Sciatic nerve (tissue), 2 donors: ENCODE measurements at regions of chr7 and their contacts with region 1.

Region 1: DNA sequence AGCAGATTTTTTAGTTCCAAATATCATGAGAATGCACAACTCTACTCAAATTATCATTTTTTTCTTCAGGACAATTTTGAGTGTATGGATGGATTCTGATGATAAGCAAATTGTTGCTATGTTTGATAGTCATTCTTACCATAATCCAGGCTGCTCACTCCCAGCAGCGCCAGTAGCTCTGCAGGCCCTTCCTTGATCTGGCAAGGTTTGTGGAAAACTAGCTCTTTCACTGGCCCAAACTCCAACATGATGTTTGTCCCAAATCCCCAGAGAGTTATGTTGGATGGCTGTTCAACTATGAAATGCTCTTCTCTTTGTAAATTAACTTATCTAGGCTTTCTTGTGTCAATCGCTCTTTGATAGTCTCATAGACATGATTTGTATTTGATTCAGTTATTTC is 933.7 kb downstream of the DNAJB9 start:
- DNase-seq: no peak
- ATAC-seq: no peak

Region 2: DNA sequence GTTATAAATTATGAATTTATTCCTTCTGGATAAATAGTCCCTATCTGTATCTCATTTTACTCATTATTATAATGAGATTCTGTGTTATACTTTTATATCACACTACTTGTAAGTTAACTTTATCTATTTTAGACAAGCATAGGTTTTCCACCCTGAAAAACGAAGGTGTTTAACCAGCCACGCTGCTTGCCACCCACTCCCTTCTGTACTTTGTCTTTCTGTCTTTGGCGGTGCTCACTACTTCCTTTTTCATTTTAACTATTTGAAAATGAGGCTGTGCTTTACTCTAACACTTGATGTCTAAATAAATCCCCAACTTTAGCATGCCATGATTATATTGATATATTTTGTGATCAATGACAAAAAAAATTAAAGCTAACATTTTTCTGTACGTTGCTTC is 19.2 kb after region 1 on chr7:
- intact Hi-C with region 1: loop called (anchors 2 kb)
- DNase-seq: no peak
- ATAC-seq: no peak